Dendritic cell treated with granulocyte-macrophage colony-stimulating factor and Interleukin-4, amounts not matched to agents 40 ng/mL and 50 ng/mL, for 4 days (primary cell): ENCODE measurements at regions of chr3 and their contacts with region 1.

Region 1: GRCh38 chr3:101803173-101803782 is 24.3 kb downstream of the NXPE3 start:
- H3K4me3 Mint-ChIP-seq: no peak overlapping the region
- H3K27ac Mint-ChIP-seq: no peak overlapping the region
- H3K4me1 Mint-ChIP-seq: no peaks in the 10 kb centered on the region
- H3K27me3 Mint-ChIP-seq: no peaks in the 10 kb centered on the region

Region 2: DNA sequence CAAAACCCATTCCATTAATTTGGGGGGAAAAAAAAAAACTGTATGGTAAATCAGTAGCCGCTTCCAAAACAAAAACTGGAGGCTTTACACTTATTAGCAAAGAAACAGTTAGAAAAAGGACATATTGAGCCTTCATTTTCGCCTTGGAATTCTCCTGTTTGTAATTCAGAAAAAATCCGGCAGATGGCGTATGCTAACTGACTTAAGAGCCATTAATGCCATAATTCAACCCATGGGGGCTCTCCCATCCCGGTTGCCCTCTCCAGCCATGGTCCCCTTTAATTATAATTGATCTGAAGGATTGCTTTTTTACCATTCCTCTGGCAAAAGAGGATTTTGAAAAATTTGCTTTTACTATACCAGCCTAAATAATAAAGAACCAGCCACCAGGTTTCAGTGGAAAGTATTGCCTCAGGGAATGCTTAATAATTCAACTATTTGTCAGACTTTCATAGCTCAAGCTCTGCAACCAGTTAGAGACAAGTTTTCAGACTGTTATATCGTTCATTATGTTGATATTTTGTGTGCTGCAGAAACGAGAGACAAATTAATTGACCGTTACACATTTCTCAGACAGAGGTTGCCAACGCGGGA is 107.4 kb before region 1 on chr3:
- intact Hi-C with region 1: loop called (anchors 5 kb)
- H3K4me3 Mint-ChIP-seq: no peak overlapping the region
- H3K27ac Mint-ChIP-seq: no peak overlapping the region
- H3K4me1 Mint-ChIP-seq: peaks cover 4% of the 10 kb centered on the region
- H3K27me3 Mint-ChIP-seq: no peaks in the 10 kb centered on the region